Activated B cell treated with CpG ODN at 0.5 μM for 24 hours (primary cell): ENCODE measurements at regions of chr19 and their contacts with region 1.

Region 1: DNA sequence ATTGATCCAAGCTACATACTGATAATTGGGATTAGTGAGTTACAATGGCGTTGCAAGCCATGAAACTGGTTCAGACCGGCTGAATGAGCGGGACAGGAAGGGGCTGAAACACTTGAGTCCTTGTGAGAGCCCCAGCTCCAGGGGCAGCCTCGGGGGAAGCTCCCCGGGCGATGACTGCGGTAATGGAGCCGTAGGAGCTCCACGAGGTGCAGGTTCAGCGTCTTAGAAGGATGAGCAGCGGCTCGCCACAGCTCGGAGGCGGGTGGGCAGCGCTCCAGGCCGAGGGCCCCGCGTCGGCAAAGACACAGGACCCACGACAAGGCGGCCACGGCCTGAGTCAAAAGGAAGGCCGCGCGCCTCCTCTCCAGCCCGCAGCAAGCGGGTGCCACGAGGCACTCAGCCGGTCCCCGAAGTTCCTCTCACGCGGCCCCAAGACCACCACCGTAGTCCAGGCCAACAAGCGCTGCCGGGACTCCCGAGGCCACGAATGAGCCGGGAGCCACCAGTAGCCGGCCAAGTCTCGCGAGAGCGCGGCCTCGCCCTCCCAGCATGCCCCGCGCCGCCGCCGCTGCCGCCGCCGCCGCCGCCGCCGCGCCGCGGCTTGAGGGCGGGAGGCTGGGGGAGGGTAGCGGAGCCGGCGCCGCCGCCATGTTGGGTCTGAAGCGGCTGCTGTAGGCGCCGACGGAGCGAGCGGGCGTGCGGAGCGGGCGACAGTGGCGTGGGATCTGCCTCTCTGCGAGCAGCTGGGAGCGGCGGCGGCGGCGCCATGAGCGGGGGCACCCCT is at the start of gene LSM14A:
- DNase-seq: peak; percentile 93
- ATAC-seq: peak; percentile 78
- H3K4me3 Mint-ChIP-seq: peak within 1 kb of the TSS; percentile 97
- H3K27ac Mint-ChIP-seq: peak within 1 kb of the TSS; percentile 98
- H3K4me1 Mint-ChIP-seq: peaks cover 55% of the 10 kb centered on the region
- H3K27me3 Mint-ChIP-seq: no peaks in the 10 kb centered on the region
- CTCF ChIP-seq: no peak
- total RNA-seq, gene LSM14A: 136 and 142 TPM in 2 replicates

Region 2: DNA sequence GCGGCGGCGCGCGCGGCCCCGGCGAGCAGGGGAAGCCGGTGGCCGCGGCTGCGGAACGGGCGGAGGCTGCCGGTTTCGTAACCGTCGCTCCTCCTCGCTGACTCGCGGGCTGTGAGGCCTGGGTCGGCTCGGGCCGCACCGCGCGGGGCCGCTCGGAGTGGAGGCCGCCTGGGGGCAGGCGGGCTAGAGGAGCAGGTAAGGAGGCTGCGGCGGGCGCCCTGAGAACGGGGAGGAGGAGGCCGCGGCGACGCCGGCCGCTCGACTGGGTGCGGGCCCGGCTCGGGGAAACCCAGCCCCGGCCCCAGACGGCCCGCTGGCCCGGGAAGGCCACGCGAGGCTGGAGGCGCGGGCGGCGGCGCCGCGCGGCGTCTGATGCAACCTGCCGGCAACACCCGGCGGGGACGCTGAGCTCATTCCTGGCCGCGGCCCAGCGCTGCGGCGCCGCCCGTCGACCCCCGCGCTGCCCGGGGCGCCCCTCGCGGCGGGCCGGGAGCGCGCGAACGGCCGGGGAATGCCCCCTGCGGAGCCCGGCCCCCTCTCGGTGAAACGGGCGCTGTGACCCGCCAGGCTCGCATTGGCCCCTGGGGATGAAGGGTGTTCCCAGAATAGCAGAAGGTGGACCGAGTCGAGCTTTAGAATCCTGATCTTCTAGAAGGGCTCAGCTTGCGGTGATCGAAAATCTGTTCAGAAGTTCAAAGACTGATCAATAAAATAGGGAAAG is 798.2 kb before region 1 on chr19 and contains the start of gene CEBPG:
- CTCF ChIA-PET with region 1: interaction called, 3 read pairs
- POLR2A ChIA-PET with region 1: interaction called, 4 read pairs
- intact Hi-C with region 1: loop called (anchors 5 kb)
- DNase-seq: no peak
- ATAC-seq: peak; percentile 34
- H3K4me3 Mint-ChIP-seq: peak within 1 kb of the TSS; percentile 86
- H3K27ac Mint-ChIP-seq: peak within 1 kb of the TSS; percentile 93
- H3K4me1 Mint-ChIP-seq: peaks cover 52% of the 10 kb centered on the region
- H3K27me3 Mint-ChIP-seq: no peaks in the 10 kb centered on the region
- CTCF ChIP-seq: no peak
- total RNA-seq, gene CEBPG: 30.6 and 32.0 TPM in 2 replicates

Region 3: GRCh38 chr19:34041925-34042521 is 130.0 kb before region 1 on chr19:
- CTCF ChIA-PET with region 1: no interaction called
- POLR2A ChIA-PET with region 1: no interaction called
- intact Hi-C with region 1: no loop called
- DNase-seq: peak; percentile 25
- ATAC-seq: no peak
- H3K4me3 Mint-ChIP-seq: no peak overlapping the region
- H3K27ac Mint-ChIP-seq: no peak overlapping the region
- H3K4me1 Mint-ChIP-seq: no peaks in the 10 kb centered on the region
- H3K27me3 Mint-ChIP-seq: peaks cover 17% of the 10 kb centered on the region
- CTCF ChIP-seq: no peak

Region 4: GRCh38 chr19:34193439-34193838 is 21.4 kb after region 1 on chr19:
- CTCF ChIA-PET with region 1: interaction called, 5 read pairs
- POLR2A ChIA-PET with region 1: interaction called, 24 read pairs
- intact Hi-C with region 1: loop called (anchors 2 kb)
- DNase-seq: no peak
- ATAC-seq: peak; percentile 85
- H3K4me3 Mint-ChIP-seq: peak overlapping the region; percentile 66
- H3K27ac Mint-ChIP-seq: peak overlapping the region; percentile 82
- H3K4me1 Mint-ChIP-seq: peaks cover 68% of the 10 kb centered on the region
- H3K27me3 Mint-ChIP-seq: no peaks in the 10 kb centered on the region
- CTCF ChIP-seq: no peak

Region 5: DNA sequence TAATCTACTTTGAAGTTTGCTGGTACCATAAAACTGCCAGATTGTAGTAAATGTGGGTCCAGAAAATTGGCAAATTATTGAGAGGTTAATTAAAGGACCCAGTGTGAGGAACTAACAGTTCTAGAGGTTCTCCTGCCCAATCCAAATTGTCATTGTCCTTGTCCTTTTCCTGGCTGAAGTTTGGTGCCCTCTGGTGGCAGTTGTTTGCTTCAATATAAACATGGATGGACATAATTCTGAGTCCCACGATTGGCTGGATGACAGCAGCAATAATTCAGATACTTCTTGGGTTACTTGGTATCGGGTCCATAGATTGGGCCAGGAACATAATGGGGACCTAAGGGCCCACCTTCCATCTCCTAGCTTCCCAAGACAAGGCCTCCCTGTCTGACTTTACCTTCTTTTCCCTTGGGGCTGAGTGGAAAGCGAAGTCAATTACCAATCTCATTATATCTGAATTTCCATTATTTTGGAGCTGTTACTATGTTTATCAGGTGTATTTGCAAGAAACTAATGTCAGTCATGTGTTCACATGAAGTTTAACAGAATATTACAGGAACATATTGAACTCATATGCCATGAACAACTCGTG is 48.5 kb after region 1 on chr19:
- CTCF ChIA-PET with region 1: interaction called, 5 read pairs
- POLR2A ChIA-PET with region 1: interaction called, 11 read pairs
- intact Hi-C with region 1: loop called (anchors 1 kb)
- DNase-seq: peak; percentile 20
- ATAC-seq: no peak
- H3K4me3 Mint-ChIP-seq: no peak overlapping the region
- H3K27ac Mint-ChIP-seq: peak overlapping the region; percentile 50
- H3K4me1 Mint-ChIP-seq: peaks cover 35% of the 10 kb centered on the region
- H3K27me3 Mint-ChIP-seq: no peaks in the 10 kb centered on the region
- CTCF ChIP-seq: peak; percentile 14

Region 6: DNA sequence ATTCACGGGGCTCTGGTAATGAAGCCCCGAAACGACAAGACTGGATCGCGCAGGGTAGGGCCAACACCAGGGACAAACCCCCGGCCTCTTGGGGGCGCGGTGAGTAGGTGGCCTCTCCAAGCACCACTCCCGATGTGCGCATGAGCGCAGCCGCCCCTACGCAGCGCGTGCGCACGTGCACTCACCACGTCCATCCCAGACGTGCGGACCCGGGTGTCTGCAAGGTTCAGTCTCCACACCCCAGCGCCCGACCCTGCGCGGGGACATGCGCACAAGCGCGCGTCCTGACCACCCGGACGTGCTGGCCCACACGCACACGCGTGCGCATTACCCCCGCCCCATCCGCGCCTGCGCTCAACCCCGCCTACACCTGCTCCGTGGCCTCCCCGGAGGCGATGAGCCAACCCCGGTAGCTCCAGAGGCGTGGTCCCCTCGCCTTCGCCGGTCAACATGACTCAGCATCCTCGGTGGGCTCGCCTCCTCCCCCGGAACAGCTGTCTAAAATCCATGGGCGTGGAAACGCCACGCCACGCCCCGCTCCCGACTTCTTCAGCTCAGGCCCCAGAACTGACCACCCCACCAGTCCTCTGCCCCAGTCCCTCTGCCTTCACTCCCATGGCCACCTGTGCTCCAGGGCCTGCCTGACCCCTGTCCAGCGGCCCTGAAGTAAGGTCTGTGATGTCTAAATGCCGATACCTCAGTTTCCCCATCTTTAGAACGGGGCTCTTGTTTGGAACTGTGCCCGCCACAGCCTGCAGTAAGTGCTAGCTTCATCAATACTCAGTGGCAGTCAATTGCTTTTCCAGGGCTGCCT is 187.3 kb after region 1 on chr19:
- CTCF ChIA-PET with region 1: no interaction called
- POLR2A ChIA-PET with region 1: interaction called, 3 read pairs
- intact Hi-C with region 1: loop called (anchors 1 kb)
- DNase-seq: peak; percentile 97
- ATAC-seq: peak; percentile 93
- H3K4me3 Mint-ChIP-seq: peak overlapping the region; percentile 92
- H3K27ac Mint-ChIP-seq: peak overlapping the region; percentile 95
- H3K4me1 Mint-ChIP-seq: peaks cover 26% of the 10 kb centered on the region
- H3K27me3 Mint-ChIP-seq: no peaks in the 10 kb centered on the region
- CTCF ChIP-seq: no peak